ENCODE measurements at regions of chr2 and their contacts with region 1.

Region 1: DNA sequence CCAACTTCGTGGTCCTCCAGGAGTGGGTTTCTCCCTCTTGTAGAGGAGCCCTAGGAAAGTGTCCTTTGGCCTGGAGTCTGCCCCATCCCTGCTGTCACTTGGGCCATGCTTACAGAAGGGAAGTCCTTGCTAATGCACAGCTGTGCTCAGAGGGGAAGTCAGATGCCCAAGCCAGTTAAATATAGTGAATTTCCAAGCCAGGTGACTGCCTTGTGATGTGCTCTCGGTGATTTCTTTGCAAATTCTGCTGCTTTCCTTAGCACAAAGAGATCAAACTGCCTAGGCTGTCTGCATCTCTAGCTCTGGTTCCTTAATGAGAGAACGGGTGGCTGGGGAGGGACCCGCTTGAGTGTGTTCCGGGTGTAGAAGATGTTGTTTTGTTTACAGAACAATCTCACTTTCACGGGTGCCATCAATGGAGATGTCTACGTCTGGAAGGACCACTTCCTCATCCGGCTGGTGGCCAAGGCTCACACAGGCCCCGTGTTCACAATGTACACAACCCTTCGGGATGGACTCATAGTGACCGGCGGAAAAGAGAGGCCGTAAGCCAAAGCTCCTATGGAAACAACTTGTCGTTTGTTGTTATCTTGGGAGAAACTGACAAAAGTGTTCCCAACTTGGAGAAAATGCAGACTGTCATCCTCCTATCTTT is 91.4 kb downstream of the RTN4 start:
- DNase-seq: no peak
- H3K4me3 ChIP-seq: no peak overlapping the region
- H3K27ac ChIP-seq: no peak overlapping the region
- H3K27me3 ChIP-seq: no peaks in the 10 kb centered on the region
- CTCF ChIP-seq: no peak

Region 2: DNA sequence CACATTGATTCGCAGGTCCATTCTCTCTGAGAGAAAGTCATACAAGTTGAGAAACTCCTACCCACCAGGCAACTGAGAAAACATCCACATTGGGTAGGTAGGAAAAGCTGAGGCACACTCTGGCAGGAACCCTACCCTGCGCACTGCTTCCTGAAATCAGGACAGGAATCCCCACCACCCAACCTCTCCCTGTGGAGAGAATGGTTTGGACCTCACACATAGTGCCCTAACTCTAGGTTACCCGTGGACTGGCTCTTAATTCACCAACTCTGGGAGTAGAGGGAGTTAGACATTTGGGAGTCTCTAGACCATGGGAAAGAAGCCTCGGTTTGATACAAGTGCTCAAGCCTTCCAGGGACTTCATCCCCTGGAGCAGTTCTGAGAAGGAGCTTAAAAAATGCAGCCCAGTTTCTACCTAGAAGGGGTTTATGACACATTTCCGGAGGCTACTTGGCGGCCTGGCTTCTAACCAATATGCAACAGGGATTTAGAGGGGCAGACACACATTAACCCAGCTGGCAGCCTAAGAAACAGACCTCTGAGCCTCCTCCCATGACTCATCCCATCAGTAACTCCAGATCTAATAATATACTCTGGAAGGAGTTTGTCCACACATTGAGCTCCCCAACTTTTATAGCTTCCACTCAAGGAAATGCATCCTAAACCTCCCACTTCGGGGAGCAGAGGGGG is 98.7 kb before region 1 on chr2:
- CTCF ChIA-PET with region 1: no interaction called
- POLR2A ChIA-PET with region 1: no interaction called
- DNase-seq: peak; percentile 53
- H3K4me3 ChIP-seq: no peak overlapping the region
- H3K27ac ChIP-seq: no peak overlapping the region
- H3K27me3 ChIP-seq: no peaks in the 10 kb centered on the region
- CTCF ChIP-seq: no peak

Region 3: GRCh38 chr2:54927085-54927750 is 31.6 kb before region 1 on chr2:
- CTCF ChIA-PET with region 1: no interaction called
- POLR2A ChIA-PET with region 1: no interaction called
- DNase-seq: no peak
- H3K4me3 ChIP-seq: no peak overlapping the region
- H3K27ac ChIP-seq: no peak overlapping the region
- H3K27me3 ChIP-seq: peaks cover 15% of the 10 kb centered on the region
- CTCF ChIP-seq: no peak

Region 4: GRCh38 chr2:54942373-54942772 is 16.5 kb before region 1 on chr2:
- CTCF ChIA-PET with region 1: interaction called, 3 read pairs
- POLR2A ChIA-PET with region 1: interaction called, 13 read pairs
- DNase-seq: no peak
- H3K4me3 ChIP-seq: no peak overlapping the region
- H3K27ac ChIP-seq: no peak overlapping the region
- H3K27me3 ChIP-seq: peaks cover 4% of the 10 kb centered on the region
- CTCF ChIP-seq: no peak